Activated T-helper 1 cell treated with anti-CD3 and anti-CD28 coated beads, Interleukin-12 subunit alpha, Interleukin-12 subunit beta, Interleukin-2, Interleukin-4 antibody, amounts not matched to agents 30 ng/mL and 10 ng/mL and 1 ng/mL, durations not matched to agents 14 hours and 24 hours and 36 hours (primary cell): ENCODE measurements at regions of chr6 and their contacts with region 1.

Region 1: DNA sequence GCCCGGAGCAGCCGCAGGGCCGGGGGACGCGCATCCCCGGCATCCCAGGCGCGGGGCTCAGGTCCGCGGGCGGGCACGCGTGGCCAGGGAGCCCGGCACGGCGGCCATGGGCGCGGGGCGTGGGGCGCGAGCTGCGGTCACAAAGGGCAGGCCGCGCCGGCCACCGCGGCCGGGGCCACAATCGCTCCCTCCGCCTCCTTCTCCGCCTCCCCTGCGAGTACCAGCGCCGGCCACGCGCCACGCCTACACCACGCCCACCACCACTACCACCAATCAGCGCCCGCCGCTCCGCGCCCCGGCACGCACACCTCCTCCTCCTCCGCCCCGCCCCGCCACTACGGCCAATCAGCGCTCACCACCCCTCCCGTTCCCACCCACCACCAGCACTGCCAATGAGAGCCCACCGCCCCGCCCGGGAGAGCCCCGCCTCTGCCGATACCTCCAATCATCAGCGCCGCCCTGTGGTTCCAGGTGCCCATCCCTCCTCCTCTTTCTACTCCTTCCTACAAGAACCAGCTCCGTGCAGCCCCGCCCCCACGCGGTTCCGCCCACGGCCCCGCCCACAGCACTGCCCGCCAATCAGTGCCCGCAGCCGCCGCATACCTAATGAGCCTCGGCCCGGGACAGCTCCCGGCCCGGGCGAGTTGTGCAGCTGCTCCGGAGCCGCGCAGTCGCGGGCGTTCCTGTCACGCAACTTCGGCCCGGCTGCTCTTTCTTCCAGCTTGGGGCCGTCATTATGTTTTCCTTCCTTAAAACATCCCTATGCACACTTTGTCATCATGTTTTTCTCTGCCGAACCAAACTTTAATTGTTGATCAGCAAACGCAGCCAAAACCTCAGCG is at the start of gene RPS6KA2:
- DNase-seq: peak; percentile 100
- H3K4me3 Mint-ChIP-seq: peak within 1 kb of the TSS; percentile 87
- H3K27ac Mint-ChIP-seq: peak within 1 kb of the TSS; percentile 79
- H3K4me1 Mint-ChIP-seq: peaks cover 29% of the 10 kb centered on the region
- H3K27me3 Mint-ChIP-seq: peaks cover 48% of the 10 kb centered on the region
- total RNA-seq, gene RPS6KA2: 2.0 and 2.7 TPM in 2 replicates

Region 2: GRCh38 chr6:166275714-166276166 is 351.5 kb before region 1 on chr6:
- intact Hi-C with region 1: loop called (anchors 5 kb)
- DNase-seq: peak; percentile 71
- H3K4me3 Mint-ChIP-seq: no peak overlapping the region
- H3K27ac Mint-ChIP-seq: no peak overlapping the region
- H3K4me1 Mint-ChIP-seq: peaks cover 6% of the 10 kb centered on the region
- H3K27me3 Mint-ChIP-seq: peaks cover 15% of the 10 kb centered on the region

Region 3: DNA sequence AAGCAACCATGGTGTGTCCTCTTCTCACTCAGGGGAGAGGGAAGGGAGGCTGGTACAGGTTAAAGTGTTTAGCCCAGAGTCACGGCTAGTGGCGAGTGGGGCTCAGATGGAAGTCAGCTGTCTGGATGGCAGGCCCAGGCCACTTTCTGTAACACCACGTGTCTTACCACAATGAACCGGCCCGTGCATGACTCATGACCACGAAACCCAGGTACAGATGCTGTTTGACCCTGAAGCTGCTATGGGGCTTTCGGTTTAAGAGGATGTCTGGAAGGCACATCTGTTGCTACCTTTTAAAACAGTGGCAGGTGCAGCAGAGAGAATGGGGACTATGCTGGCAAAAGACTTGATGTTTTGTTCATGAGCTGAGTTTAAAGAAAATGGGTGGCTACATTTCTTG is 208.0 kb before region 1 on chr6:
- intact Hi-C with region 1: loop called (anchors 2 kb)
- DNase-seq: peak; percentile 61
- H3K4me3 Mint-ChIP-seq: no peak overlapping the region
- H3K27ac Mint-ChIP-seq: no peak overlapping the region
- H3K4me1 Mint-ChIP-seq: peaks cover 62% of the 10 kb centered on the region
- H3K27me3 Mint-ChIP-seq: peaks cover 4% of the 10 kb centered on the region

Region 4: GRCh38 chr6:166540631-166541331 is 86.5 kb before region 1 on chr6:
- intact Hi-C with region 1: loop called (anchors 1 kb)
- DNase-seq: peak; percentile 39
- H3K4me3 Mint-ChIP-seq: peak overlapping the region; percentile 72
- H3K27ac Mint-ChIP-seq: peak overlapping the region; percentile 86
- H3K4me1 Mint-ChIP-seq: peaks cover 26% of the 10 kb centered on the region
- H3K27me3 Mint-ChIP-seq: peaks cover 5% of the 10 kb centered on the region

Region 5: DNA sequence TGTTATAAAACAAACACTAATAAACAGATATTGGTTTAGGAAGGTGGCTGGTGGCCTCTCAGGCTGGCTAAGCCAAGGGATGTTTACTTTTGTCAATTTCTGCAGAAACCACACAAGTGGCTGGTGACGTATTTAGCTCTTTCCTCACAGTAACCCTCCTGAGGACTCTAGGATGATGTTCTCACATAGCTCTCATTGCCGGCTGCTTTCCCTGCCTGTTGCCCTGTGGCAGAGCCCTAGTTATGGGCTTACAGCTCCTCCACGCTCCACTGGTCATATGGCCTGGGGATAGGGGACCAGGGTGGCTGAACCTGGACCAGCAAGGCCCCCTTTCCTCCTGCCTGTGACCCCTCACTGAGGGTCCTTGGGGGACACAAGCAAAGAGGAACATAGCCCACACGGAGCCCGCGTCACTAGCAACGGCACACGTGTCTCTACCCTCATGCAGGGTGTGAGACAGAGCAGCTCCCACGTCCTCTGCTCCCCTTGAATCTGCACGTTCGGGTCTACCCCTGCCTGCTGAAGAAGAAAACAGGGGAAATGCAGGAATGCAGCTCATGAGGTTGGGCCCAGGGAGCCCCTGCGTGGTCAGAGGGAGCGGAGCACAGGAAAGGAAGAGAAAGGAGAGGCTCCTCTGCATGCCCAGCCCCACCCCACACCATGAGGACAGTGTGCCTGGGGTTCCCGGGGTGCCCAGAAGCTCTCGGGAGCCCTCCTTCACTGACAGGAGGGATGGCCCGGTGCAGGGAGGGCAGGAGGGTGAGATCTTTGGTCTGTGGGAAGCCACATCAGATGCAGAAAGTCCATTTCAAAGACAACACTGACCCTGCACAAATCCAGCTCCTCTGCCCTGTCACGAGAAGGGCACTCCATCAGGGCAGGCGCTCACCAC is 54.6 kb before region 1 on chr6:
- intact Hi-C with region 1: no loop called
- DNase-seq: no peak
- H3K4me3 Mint-ChIP-seq: no peak overlapping the region
- H3K27ac Mint-ChIP-seq: no peak overlapping the region
- H3K4me1 Mint-ChIP-seq: no peaks in the 10 kb centered on the region
- H3K27me3 Mint-ChIP-seq: peaks cover 3% of the 10 kb centered on the region

Region 6: GRCh38 chr6:166615059-166615770 is 12.0 kb before region 1 on chr6:
- intact Hi-C with region 1: no loop called
- DNase-seq: no peak
- H3K4me3 Mint-ChIP-seq: no peak overlapping the region
- H3K27ac Mint-ChIP-seq: no peak overlapping the region
- H3K4me1 Mint-ChIP-seq: no peaks in the 10 kb centered on the region
- H3K27me3 Mint-ChIP-seq: no peaks in the 10 kb centered on the region

Region 7: GRCh38 chr6:166640342-166641043 is 13.2 kb after region 1 on chr6:
- intact Hi-C with region 1: no loop called
- DNase-seq: no peak
- H3K4me3 Mint-ChIP-seq: peak overlapping the region; percentile 6
- H3K27ac Mint-ChIP-seq: no peak overlapping the region
- H3K4me1 Mint-ChIP-seq: peaks cover 19% of the 10 kb centered on the region
- H3K27me3 Mint-ChIP-seq: peaks cover 16% of the 10 kb centered on the region

Region 8: GRCh38 chr6:166800137-166800536 is 172.9 kb after region 1 on chr6:
- intact Hi-C with region 1: no loop called
- DNase-seq: no peak
- H3K4me3 Mint-ChIP-seq: no peak overlapping the region
- H3K27ac Mint-ChIP-seq: no peak overlapping the region
- H3K4me1 Mint-ChIP-seq: no peaks in the 10 kb centered on the region
- H3K27me3 Mint-ChIP-seq: peaks cover 2% of the 10 kb centered on the region

Region 9: GRCh38 chr6:166956444-166957086 is 329.3 kb after region 1 on chr6 and contains the start of gene RNASET2:
- intact Hi-C with region 1: loop called (anchors 1 kb)
- DNase-seq: peak; percentile 98
- H3K4me3 Mint-ChIP-seq: peak within 1 kb of the TSS; percentile 92
- H3K27ac Mint-ChIP-seq: peak within 1 kb of the TSS; percentile 91
- H3K4me1 Mint-ChIP-seq: peaks cover 74% of the 10 kb centered on the region
- H3K27me3 Mint-ChIP-seq: no peaks in the 10 kb centered on the region
- total RNA-seq, gene RNASET2: 99.5 TPM in 2 replicates

Region 10: DNA sequence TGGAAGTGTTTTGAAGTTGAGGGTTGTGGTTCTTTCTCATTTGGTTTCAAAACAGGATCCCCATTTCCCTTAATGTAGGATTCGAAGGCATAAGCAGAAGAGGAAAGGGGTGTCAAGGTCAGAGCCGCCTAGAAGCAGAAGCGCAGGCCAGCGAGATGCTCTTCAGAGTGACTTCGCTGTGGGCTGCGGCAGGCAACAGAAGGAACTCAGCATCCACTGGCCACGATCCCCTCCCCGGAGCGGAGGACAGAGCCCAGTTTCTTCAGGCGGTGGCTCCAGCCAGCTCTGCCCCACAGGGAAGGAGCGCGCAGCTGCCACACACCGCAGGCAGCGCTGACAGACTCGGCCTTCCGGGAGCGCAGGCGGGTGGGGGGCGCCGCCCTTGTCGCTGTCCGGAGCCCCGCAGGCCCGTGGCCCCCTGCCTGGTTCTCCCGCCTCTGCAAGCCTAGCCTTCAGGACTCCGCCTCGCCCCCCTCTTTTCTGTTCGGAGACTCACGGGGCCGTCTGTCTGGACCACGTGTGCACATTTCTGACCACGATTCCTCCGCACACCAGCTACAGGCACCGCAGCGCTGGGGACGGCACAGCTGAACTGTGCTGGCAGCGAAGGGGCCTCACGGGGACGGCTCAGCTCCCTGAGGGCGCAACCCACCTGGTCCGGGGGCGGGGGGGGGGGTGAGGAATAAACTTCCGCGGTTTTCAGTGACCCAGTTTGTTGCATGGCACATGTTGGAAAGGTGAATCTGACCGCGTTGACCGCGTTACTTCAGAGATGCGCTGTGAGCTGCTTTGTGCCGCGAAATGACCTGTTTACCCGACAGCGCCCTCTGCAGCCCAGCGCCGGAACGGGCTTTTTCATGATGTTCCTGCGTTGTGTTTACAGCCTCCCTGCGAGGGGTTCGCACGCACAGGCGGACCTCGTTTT is 723.7 kb after region 1 on chr6:
- intact Hi-C with region 1: loop called (anchors 2 kb)
- DNase-seq: peak; percentile 72
- H3K4me3 Mint-ChIP-seq: peak overlapping the region; percentile 84
- H3K27ac Mint-ChIP-seq: peak overlapping the region; percentile 78
- H3K4me1 Mint-ChIP-seq: peaks cover 24% of the 10 kb centered on the region
- H3K27me3 Mint-ChIP-seq: peaks cover 33% of the 10 kb centered on the region